ENCODE measurements at regions of chr10 and their contacts with region 1.

Region 1: GRCh38 chr10:72319416-72320254 is 35.1 kb downstream of the DNAJB12 start:
- DNase-seq: peak; percentile 83
- ATAC-seq: peak; percentile 67
- H3K4me3 Mint-ChIP-seq: peak overlapping the region; percentile 41
- H3K27ac Mint-ChIP-seq: peak overlapping the region; percentile 96
- H3K4me1 Mint-ChIP-seq: peaks cover 55% of the 10 kb centered on the region
- H3K27me3 Mint-ChIP-seq: no peaks in the 10 kb centered on the region; the same call in 1 of the 2 replicates
- CTCF ChIP-seq: no peak

Region 2: GRCh38 chr10:71985542-71986250 is 333.9 kb before region 1 on chr10:
- CTCF ChIA-PET with region 1: no interaction called
- POLR2A ChIA-PET with region 1: no interaction called
- DNase-seq: no peak
- ATAC-seq: no peak
- H3K4me3 Mint-ChIP-seq: no peak overlapping the region
- H3K27ac Mint-ChIP-seq: no peak overlapping the region
- H3K4me1 Mint-ChIP-seq: peaks cover 5% of the 10 kb centered on the region
- H3K27me3 Mint-ChIP-seq: no peaks in the 10 kb centered on the region
- CTCF ChIP-seq: no peak

Region 3: DNA sequence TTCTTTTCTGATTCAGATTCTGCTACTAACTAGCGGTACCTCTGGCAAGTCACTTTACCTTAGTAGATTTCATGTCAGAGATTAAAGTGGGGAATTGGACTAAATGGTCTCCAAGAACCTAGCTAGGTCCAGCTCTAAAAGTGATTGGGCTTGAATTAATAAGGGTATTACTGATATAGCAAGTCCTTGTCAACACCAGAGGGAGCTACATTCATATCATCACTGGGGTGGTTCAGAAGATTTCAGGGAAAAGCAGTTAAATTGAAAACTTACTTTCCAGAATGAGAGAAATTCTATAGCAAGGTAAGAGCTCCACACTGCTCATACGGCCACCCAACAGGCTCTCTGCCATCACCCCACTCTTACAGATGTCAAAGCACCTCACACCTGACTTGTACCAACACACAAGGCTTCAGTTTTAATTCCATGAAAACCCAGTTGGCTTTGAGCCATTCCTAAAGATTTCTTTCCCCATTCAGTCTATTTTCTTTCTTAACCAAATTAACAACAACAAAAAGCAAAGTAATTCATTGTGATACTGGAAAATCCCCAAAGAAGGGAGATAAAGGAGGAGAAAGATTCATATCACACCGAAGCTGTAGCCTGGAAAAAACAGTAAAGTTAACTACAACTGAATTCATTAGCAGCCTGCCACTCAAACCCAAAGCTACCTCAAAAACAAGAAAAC is 193.3 kb before region 1 on chr10:
- CTCF ChIA-PET with region 1: interaction called, 15 read pairs
- POLR2A ChIA-PET with region 1: interaction called, 6 read pairs
- DNase-seq: no peak
- ATAC-seq: peak; percentile 60; the same call in 1 of the 2 replicates
- H3K4me3 Mint-ChIP-seq: no peak overlapping the region
- H3K27ac Mint-ChIP-seq: peak overlapping the region; percentile 55
- H3K4me1 Mint-ChIP-seq: peaks cover 12% of the 10 kb centered on the region
- H3K27me3 Mint-ChIP-seq: no peaks in the 10 kb centered on the region
- CTCF ChIP-seq: no peak

Region 4: DNA sequence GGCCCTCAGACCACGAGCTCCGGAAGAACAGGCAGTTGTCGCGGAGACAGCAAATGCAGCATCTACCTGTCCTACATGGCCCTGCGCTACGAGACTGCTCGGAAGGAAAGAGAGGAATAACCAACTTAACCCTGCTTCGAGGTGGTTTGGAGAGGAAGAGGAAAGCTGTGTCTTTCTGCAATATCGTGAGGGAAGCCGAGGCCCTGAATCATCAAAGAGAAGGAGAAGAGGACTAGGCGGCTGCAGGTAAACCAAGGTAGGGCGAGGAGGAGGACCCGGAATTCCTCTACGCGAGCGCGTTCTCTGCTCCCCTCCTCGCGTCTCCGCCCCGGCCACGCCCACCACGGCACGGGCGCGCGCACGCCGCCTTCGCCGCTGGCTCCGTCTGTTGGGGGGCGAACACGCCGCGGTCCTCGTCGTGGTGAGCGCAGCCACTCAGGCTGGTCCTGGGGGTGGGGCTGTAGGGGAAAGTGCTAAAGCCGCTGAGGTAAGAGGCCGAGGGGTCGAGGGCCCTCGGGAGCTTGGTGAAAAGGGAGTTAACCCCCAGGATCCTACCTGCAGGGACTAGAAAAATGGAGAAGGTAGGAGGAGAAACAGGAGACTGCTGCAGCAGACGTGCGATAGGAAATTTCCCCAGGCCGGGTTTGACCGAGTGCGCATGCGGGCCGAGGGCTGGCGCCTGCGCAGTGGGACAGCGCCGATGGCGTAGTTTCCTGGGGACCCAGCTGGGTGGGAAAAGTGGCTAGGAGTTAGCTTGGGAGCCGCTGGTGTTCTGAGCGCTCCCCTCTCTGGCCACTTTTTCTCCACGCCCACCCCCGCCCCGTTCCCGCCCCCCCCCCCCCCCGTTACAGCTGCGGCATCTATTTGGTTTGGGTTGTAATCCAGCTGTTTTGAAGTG is 103.7 kb before region 1 on chr10 and contains the starts of genes ANAPC16 and ASCC1:
- CTCF ChIA-PET with region 1: no interaction called
- POLR2A ChIA-PET with region 1: interaction called, 16 read pairs
- DNase-seq: peak; percentile 94
- ATAC-seq: peak; percentile 92
- H3K4me3 Mint-ChIP-seq: peak within 1 kb of the TSS; percentile 97
- H3K27ac Mint-ChIP-seq: peak within 1 kb of the TSS; percentile 100
- H3K4me1 Mint-ChIP-seq: peaks cover 23% of the 10 kb centered on the region
- H3K27me3 Mint-ChIP-seq: no peaks in the 10 kb centered on the region; the same call in 1 of the 2 replicates
- CTCF ChIP-seq: no peak
- total RNA-seq, gene ANAPC16: 52.3 to 72.4 TPM (median 72.3 TPM) in 3 replicates
- total RNA-seq, gene ASCC1: 30.4 to 38.7 TPM (median 32.5 TPM) in 3 replicates

Region 5: DNA sequence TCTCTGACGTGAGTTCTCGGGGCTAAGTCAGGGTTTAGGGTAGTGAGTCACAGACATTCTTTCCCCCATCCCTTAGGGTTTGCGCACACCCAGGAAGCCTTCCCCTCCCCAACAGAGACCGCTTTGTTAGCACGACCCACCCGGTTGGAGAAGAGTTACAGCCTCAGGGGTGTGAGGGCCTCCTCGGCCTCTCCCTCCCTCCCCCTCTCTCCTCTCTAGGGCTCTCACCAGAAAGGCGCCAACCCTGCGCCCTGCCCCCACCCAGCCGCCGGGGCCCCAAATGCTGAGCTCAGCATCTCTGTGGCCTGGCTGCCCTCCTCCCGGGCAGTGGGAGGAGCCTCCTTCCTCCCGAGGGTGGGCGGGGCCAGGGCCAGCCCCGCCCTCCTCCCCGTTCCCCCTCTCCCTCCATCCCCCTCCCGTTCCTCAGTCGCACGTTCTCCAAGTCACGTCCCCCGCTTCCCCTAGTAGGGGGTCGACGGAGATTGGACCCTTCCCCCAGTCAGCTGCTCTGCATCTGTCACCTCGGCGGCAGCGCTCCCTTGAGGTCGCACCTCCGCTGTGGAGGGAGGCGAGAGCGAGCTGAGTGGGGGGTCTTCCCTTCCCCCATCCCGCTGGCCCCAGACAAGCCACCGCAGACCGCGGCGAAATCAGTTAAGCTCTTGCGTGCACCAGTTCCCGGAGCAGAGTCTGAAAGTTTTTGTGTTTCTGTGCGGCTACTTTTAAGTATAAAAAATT is 58.9 kb before region 1 on chr10:
- CTCF ChIA-PET with region 1: interaction called, 16 read pairs
- POLR2A ChIA-PET with region 1: interaction called, 27 read pairs
- DNase-seq: peak; percentile 98
- ATAC-seq: peak; percentile 88
- H3K4me3 Mint-ChIP-seq: peak overlapping the region; percentile 64
- H3K27ac Mint-ChIP-seq: peak overlapping the region; percentile 99
- H3K4me1 Mint-ChIP-seq: peaks cover 70% of the 10 kb centered on the region
- H3K27me3 Mint-ChIP-seq: no peaks in the 10 kb centered on the region; the same call in 1 of the 2 replicates
- CTCF ChIP-seq: no peak

Region 6: DNA sequence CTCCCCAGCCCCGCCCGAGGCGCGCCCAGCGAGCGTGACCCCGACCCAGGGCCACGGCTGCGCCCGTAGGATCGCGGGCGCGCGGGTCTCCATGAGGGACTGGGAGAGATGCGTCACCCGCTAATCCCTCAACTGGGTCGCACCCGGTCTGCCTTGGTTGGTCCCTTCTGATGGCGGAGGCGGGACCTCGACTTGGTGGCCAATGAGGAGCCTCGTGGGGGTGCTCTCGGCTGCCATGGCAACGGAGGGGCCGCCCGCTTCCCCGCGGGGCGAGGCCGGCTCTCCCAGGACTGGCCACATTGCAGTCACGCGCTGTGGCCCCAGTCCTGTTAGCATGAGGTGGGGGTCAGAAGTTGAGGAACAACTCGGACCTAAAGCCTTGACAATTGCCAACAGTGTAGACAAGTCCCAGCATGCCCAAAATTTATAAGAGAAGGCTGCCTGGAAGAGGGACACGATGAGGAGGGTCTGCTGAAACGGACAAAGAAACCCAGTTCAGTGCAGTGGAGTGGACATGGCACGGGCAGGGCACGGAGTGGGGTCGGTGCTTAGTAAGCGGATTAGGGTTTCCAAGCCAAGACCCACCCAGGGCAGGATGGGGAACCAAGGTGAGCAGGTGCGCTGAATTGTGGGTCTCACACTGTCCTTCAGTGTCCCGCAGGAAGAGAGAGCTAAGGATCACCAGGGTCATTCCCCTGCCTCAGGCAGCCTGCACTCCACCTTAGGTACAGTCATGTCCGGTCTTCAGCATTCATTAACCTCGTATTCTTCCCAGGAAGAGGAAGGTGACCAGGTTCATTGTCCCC is 21.5 kb before region 1 on chr10:
- CTCF ChIA-PET with region 1: interaction called, 3 read pairs
- POLR2A ChIA-PET with region 1: interaction called, 13 read pairs
- DNase-seq: peak; percentile 96
- ATAC-seq: peak; percentile 97
- H3K4me3 Mint-ChIP-seq: peak overlapping the region; percentile 72
- H3K27ac Mint-ChIP-seq: peak overlapping the region; percentile 53
- H3K4me1 Mint-ChIP-seq: peaks cover 25% of the 10 kb centered on the region
- H3K27me3 Mint-ChIP-seq: peaks cover 4% of the 10 kb centered on the region; the same call in 1 of the 2 replicates
- CTCF ChIP-seq: no peak

Region 7: GRCh38 chr10:72331601-72332422 is 12.2 kb after region 1 on chr10:
- CTCF ChIA-PET with region 1: interaction called, 9 read pairs
- POLR2A ChIA-PET with region 1: interaction called, 17 read pairs
- DNase-seq: peak; percentile 81
- ATAC-seq: peak; percentile 88
- H3K4me3 Mint-ChIP-seq: peak overlapping the region; percentile 54
- H3K27ac Mint-ChIP-seq: peak overlapping the region; percentile 92
- H3K4me1 Mint-ChIP-seq: peaks cover 48% of the 10 kb centered on the region
- H3K27me3 Mint-ChIP-seq: no peaks in the 10 kb centered on the region
- CTCF ChIP-seq: no peak

Region 8: DNA sequence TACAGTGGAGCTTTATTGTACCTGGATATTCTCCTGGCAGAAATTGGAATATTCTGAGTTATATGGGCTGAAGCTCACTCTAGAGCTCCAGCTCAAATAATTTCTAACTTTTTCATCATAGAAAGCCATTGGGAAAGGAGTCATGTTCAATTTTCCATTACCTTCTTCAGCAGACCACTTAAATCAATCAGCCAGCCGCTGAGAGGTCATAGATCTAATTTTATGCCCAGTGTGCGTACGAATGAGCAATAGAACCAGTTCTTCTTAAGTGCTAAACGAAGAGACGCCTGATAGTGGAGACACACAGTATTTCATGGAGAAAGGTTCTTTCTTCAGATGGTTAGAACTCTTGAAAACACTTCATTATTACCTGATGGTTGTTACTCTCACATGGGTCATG is 70.1 kb after region 1 on chr10:
- CTCF ChIA-PET with region 1: no interaction called
- POLR2A ChIA-PET with region 1: no interaction called
- DNase-seq: no peak
- ATAC-seq: no peak
- H3K4me3 Mint-ChIP-seq: no peak overlapping the region
- H3K27ac Mint-ChIP-seq: no peak overlapping the region
- H3K4me1 Mint-ChIP-seq: peaks cover 14% of the 10 kb centered on the region
- H3K27me3 Mint-ChIP-seq: no peaks in the 10 kb centered on the region
- CTCF ChIP-seq: no peak

Region 9: GRCh38 chr10:72637398-72637857 is 317.8 kb after region 1 on chr10:
- CTCF ChIA-PET with region 1: no interaction called
- POLR2A ChIA-PET with region 1: no interaction called
- DNase-seq: no peak
- ATAC-seq: no peak
- H3K4me3 Mint-ChIP-seq: no peak overlapping the region
- H3K27ac Mint-ChIP-seq: no peak overlapping the region
- H3K4me1 Mint-ChIP-seq: peaks cover 8% of the 10 kb centered on the region
- H3K27me3 Mint-ChIP-seq: no peaks in the 10 kb centered on the region
- CTCF ChIP-seq: no peak

Measured in WTC11 (cell line).